Tibial artery (tissue), 4 donors: ENCODE measurements at regions of chr16 and their contacts with region 1.

Region 1: GRCh38 chr16:24918641-24919040 is 72.9 kb downstream of the SLC5A11 start:
- DNase-seq: no peak
- H3K4me3 ChIP-seq: no peak overlapping the region
- H3K27ac ChIP-seq: no peak overlapping the region
- H3K4me1 ChIP-seq: no peaks in the 10 kb centered on the region
- H3K27me3 ChIP-seq: no peaks in the 10 kb centered on the region
- CTCF ChIP-seq: no peak

Region 2: GRCh38 chr16:25093208-25094061 is 174.8 kb after region 1 on chr16:
- intact Hi-C with region 1: loop called (anchors 10 kb)
- DNase-seq: no peak
- H3K4me3 ChIP-seq: no peak overlapping the region
- H3K27ac ChIP-seq: no peak overlapping the region
- H3K4me1 ChIP-seq: no peaks in the 10 kb centered on the region
- H3K27me3 ChIP-seq: no peaks in the 10 kb centered on the region
- CTCF ChIP-seq: no peak